Activated CD8-positive, alpha-beta T cell treated with anti-CD3 and anti-CD28 coated beads for 36 hours (primary cell): ENCODE measurements at regions of chr1 and their contacts with region 1.

Region 1: DNA sequence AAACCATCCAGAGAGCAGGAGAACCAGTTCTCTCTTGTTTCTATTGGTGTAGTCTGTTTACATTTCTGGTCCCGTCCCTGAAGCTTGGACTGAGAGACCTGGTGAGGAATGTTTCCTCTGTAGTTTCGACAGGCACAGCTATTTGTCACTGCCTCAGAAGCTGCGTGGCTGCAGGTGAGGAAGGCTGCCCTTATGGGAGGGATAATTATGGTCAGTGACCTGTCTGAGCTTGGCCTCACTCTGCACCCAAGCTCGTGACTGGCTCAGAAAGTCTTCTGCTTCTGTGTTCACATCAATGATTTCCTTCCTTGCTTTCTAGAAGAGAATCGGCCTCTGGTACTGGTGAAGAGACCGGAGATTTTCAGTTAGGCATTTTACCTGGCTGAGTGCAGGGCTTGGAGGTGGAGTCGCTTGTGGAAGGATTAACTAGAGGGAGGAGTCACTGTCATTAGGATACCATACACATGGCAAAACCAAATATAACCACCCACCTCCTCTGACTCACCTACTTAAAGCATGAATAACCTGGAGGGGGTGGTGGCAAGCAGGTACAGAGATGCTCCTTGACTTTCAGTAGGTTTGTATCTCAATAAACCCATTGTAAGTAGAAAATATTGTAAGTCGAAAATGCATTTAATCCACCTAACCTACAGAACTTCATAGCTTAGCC is 19.9 kb upstream of the WDR26 start:
- DNase-seq: no peak
- ATAC-seq: no peak
- H3K4me3 Mint-ChIP-seq: no peak overlapping the region
- H3K27ac Mint-ChIP-seq: no peak overlapping the region
- H3K4me1 Mint-ChIP-seq: peaks cover 27% of the 10 kb centered on the region
- H3K27me3 Mint-ChIP-seq: no peaks in the 10 kb centered on the region
- CTCF ChIP-seq: no peak

Region 2: DNA sequence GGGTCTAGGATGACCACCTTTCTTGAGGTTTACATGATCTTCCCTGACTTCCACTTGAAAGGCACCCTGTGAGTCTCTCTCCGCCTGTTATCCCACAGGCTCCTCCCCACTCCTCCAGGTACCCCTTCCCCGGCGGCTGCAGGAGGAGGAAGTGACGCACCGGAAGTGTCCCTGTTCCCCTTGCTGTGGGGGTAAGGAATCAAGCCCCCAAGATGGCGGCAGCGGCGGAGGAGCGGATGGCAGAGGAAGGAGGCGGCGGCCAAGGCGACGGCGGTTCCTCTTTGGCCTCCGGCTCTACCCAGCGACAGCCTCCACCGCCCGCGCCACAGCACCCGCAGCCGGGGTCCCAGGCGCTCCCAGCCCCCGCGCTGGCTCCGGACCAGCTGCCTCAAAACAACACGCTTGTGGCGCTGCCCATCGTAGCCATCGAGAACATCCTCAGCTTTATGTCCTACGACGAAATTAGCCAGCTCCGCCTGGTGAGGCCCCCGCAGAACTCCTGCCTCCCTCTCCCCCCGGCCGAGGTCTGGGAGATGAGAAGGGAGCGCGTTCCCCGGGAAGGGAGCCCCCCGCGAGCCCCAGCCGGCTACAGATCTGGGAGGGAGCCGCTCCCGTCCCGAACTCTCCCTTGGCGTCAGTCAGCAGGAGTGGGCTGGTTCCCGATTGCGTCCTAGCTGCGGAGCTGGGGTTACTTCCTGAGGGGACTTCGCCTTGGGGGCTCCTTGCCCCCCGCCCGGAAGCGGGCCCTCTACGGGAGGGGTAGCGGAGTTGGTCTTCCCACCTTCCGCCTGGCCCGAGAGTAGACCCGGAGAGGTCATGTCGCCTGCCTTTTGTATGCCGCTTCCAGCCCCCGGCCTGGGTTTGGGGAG is 340.4 kb before region 1 on chr1 and contains the start of gene FBXO28:
- CTCF ChIA-PET with region 1: interaction called, 10 read pairs
- POLR2A ChIA-PET with region 1: no interaction called
- intact Hi-C with region 1: loop called (anchors 5 kb)
- DNase-seq: peak; percentile 97
- ATAC-seq: peak; percentile 98
- H3K4me3 Mint-ChIP-seq: peak within 1 kb of the TSS; percentile 80
- H3K27ac Mint-ChIP-seq: peak within 1 kb of the TSS; percentile 84
- H3K4me1 Mint-ChIP-seq: peaks cover 27% of the 10 kb centered on the region
- H3K27me3 Mint-ChIP-seq: peaks cover 2% of the 10 kb centered on the region
- CTCF ChIP-seq: no peak
- total RNA-seq, gene FBXO28: 21.5 to 21.7 TPM

Region 3: DNA sequence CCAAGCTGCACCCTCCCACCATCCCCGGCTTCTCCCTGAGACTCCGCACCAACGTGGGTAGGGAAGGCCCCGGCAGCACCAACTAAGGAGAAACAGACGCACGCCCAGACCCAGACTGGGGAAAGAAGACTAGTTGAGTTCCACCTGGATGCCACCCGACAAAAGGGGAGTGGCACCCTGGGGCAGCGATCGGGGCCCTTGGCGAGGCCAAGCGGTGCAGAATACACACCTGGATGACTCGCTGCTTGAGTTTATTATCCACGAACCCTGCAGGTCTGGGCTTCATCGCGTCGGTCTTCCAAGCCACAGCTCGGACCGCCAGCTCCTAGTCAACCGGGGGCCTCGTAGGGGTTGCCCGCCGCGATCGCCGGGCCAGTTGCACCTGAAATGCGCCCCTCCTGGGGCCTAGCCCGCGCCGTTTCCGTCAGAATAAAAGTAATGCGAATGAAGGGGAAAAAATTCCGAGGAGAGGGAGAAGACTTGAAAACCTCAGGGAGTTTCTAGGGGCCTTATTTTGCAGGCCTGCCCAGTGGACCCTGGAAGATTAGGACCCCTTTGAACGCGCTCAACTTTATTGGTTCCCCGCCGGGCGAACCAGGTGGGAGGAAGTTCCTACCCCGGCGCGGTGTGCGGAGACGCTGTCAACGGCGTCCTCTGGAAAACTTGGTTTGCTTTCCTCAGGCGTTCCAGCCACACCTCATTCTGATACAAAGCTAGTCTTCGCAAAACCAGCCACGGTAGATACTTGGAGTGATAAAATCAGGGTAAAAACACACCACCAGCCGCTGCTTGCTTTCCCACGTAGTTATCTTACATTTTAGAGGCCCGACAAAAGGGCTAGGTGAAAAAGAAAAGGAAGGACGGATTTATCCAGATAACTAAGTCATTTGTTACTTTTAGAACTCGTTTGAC is 124.4 kb before region 1 on chr1 and contains the start of gene NVL:
- CTCF ChIA-PET with region 1: interaction called, 11 read pairs
- POLR2A ChIA-PET with region 1: no interaction called
- intact Hi-C with region 1: no loop called
- DNase-seq: peak; percentile 85
- ATAC-seq: peak; percentile 88
- H3K4me3 Mint-ChIP-seq: peak within 1 kb of the TSS; percentile 88
- H3K27ac Mint-ChIP-seq: peak within 1 kb of the TSS; percentile 99
- H3K4me1 Mint-ChIP-seq: peaks cover 40% of the 10 kb centered on the region
- H3K27me3 Mint-ChIP-seq: no peaks in the 10 kb centered on the region
- CTCF ChIP-seq: no peak
- total RNA-seq, gene NVL: 37.7 to 40.4 TPM

Region 4: GRCh38 chr1:224411766-224412165 is 42.8 kb before region 1 on chr1:
- CTCF ChIA-PET with region 1: interaction called, 18 read pairs
- POLR2A ChIA-PET with region 1: no interaction called
- intact Hi-C with region 1: no loop called
- DNase-seq: no peak
- ATAC-seq: peak; percentile 34
- H3K4me3 Mint-ChIP-seq: no peak overlapping the region
- H3K27ac Mint-ChIP-seq: peak overlapping the region; percentile 39
- H3K4me1 Mint-ChIP-seq: peaks cover 13% of the 10 kb centered on the region
- H3K27me3 Mint-ChIP-seq: no peaks in the 10 kb centered on the region
- CTCF ChIP-seq: no peak

Region 5: DNA sequence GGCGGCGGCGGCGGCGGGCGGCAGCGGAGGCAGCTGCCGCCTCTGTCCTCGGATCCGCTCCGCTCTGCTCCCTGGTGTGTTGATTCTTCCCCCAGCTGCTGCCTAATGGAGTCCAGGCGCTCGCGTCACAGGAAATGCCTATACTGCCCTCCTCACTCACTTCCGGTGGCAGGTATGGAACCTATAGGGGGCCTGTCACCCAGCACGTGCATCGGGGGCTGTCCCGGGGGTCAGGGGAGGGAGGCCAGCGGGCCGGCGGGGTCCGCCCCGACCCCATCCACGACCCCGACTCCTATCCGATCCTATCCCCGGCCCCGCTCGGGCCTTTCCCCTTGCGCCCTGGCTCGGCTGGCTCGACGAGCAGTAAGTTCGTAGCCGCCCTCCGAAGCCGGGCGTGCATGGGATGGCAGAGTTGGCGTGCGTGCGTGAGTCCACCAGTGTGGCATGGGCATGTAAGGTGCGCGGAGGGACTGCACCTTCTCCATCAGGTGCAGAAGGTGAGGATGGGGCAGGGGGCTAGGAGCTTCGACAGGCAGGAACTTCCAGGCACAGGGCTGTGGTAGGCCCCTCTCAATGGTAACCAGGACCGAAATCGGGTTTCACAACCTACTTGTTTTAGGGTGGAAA is 19.7 kb before region 1 on chr1 and contains the start of gene WDR26:
- CTCF ChIA-PET with region 1: interaction called, 33 read pairs
- POLR2A ChIA-PET with region 1: interaction called, 8 read pairs
- intact Hi-C with region 1: no loop called
- DNase-seq: peak; percentile 92
- ATAC-seq: peak; percentile 90
- H3K4me3 Mint-ChIP-seq: peak within 1 kb of the TSS; percentile 96
- H3K27ac Mint-ChIP-seq: peak within 1 kb of the TSS; percentile 99
- H3K4me1 Mint-ChIP-seq: peaks cover 50% of the 10 kb centered on the region
- H3K27me3 Mint-ChIP-seq: no peaks in the 10 kb centered on the region
- CTCF ChIP-seq: no peak
- total RNA-seq, gene WDR26: 75.2 to 75.8 TPM

Region 6: DNA sequence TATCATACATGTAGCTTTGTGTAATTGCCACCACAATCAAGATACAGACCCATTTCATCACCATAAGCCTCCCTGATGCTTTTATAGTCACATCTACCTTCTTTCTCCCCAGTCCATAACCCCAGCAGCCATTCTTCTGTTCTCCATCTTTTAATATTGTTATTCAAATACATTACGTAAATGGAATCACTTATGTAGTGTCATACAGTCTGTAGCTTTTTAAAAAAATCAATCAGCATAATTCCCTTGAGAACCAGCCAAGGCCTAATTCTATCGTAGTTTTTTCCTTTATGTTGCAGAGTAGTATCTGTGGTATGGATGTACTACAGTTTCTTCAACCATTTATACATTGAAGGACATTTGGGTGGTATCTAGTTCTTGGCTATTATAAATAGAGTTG is 11.6 kb after region 1 on chr1:
- CTCF ChIA-PET with region 1: interaction called, 16 read pairs
- POLR2A ChIA-PET with region 1: no interaction called
- intact Hi-C with region 1: no loop called
- DNase-seq: no peak
- ATAC-seq: no peak
- H3K4me3 Mint-ChIP-seq: no peak overlapping the region
- H3K27ac Mint-ChIP-seq: no peak overlapping the region
- H3K4me1 Mint-ChIP-seq: peaks cover 10% of the 10 kb centered on the region
- H3K27me3 Mint-ChIP-seq: no peaks in the 10 kb centered on the region
- CTCF ChIP-seq: no peak